ENCODE measurements at regions of chr17 and their contacts with region 1.

Region 1: GRCh38 chr17:38681096-38681495 is 6.3 kb upstream of the EPOP start:
- DNase-seq: no peak
- ATAC-seq: no peak
- H3K4me3 ChIP-seq: no peak overlapping the region
- H3K27ac ChIP-seq: no peak overlapping the region
- H3K4me1 ChIP-seq: peaks cover 0 to 8% (median 0%) of the 10 kb centered on the region in 4 donors
- H3K27me3 ChIP-seq: no peaks in the 10 kb centered on the region
- CTCF ChIP-seq: no peak
- POLR2A ChIP-seq: no peak

Region 2: GRCh38 chr17:38729886-38730525 is 48.9 kb after region 1 on chr17 and contains the start of gene CISD3:
- intact Hi-C with region 1: loop called (anchors 5 kb)
- DNase-seq: peak; percentile 91 to 93 (median 91)
- ATAC-seq: peak; percentile 79 to 85 (median 80)
- H3K4me3 ChIP-seq: peak within 1 kb of the TSS; percentile 76 to 89 (median 88)
- H3K27ac ChIP-seq: peak within 1 kb of the TSS; percentile 76 to 89 (median 84)
- H3K4me1 ChIP-seq: peaks cover 0 to 27% (median 14%) of the 10 kb centered on the region in 4 donors
- H3K27me3 ChIP-seq: no peaks in the 10 kb centered on the region
- CTCF ChIP-seq: peak; percentile 56 to 97 (median 75)
- POLR2A ChIP-seq: peak; percentile 21
- total RNA-seq, gene CISD3: 34.2 to 88.1 (median 55.1) TPM

Region 3: DNA sequence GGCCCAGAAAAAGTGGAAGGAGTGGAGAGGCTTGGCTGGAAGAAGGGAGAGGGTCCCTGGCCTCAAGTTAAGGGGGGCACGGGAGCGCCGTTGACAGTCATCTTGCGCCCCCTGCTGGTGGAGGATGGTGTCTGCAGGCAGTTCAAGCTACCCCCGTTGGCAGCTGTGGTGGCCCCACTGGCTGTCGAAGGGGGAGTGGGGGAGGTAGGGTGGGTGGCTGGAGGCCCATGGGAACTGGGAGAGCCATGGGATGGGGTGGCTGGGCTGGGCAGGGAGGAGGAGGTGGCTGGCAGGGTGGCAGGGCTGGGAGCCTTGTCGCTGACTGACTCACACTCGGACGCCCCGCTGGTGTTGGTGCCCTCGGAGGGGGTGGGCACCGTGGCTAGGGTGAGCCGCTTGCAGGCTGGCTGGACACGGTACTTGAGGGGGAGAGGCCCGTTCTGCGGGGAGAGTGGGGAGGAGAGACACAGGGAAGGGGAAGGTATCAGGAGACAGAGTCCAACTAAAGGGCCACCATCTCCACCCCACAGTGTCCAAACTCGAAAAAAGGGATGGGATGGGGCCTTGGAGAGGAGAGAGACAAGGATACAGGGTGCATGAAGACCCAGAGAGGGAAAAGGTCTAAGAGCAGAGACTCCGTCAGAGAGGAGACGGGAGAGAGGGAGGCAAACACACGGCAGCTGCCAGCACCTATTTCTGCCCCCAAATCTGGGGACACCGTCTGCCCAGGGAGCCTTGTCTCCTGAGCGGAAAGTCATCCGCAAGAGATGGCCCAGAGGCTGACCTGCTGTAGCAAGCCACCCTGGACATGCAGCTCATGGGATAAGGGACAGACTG is 54.3 kb after region 1 on chr17:
- intact Hi-C with region 1: loop called (anchors 5 kb)
- DNase-seq: peak; percentile 56 to 71 (median 64)
- ATAC-seq: peak in 2 of 4 donors; percentile 15 to 26
- H3K4me3 ChIP-seq: no peak overlapping the region
- H3K27ac ChIP-seq: no peak overlapping the region
- H3K4me1 ChIP-seq: peaks cover 0 to 22% (median 11%) of the 10 kb centered on the region in 4 donors
- H3K27me3 ChIP-seq: no peaks in the 10 kb centered on the region
- CTCF ChIP-seq: peak; percentile 70 to 79 (median 76)
- POLR2A ChIP-seq: no peak

Region 4: GRCh38 chr17:38748149-38748891 is 67.2 kb after region 1 on chr17 and contains the start of gene PCGF2:
- intact Hi-C with region 1: no loop called
- DNase-seq: peak; percentile 73 to 83 (median 74)
- ATAC-seq: peak in 1 of 4 donors; percentile 8
- H3K4me3 ChIP-seq: peak within 1 kb of the TSS; percentile 46 to 59 (median 50)
- H3K27ac ChIP-seq: peak within 1 kb of the TSS; percentile 49 to 88 (median 59)
- H3K4me1 ChIP-seq: peaks cover 0 to 40% (median 4%) of the 10 kb centered on the region in 4 donors
- H3K27me3 ChIP-seq: no peaks in the 10 kb centered on the region
- CTCF ChIP-seq: no peak
- POLR2A ChIP-seq: no peak
- total RNA-seq, gene PCGF2: 1.7 to 8.0 (median 3.9) TPM

Region 5: GRCh38 chr17:39517224-39517623 is 836.1 kb after region 1 on chr17:
- intact Hi-C with region 1: no loop called
- DNase-seq: no peak
- ATAC-seq: no peak
- H3K4me3 ChIP-seq: no peak overlapping the region
- H3K27ac ChIP-seq: no peak overlapping the region
- H3K4me1 ChIP-seq: no peaks in the 10 kb centered on the region
- H3K27me3 ChIP-seq: no peaks in the 10 kb centered on the region
- CTCF ChIP-seq: no peak
- POLR2A ChIP-seq: no peak

Measured in right lobe of liver (tissue), 6 donors.